ENCODE measurements at regions of chr15 and their contacts with region 1.

Region 1: GRCh38 chr15:101088788-101089583 is 162.9 kb downstream of the CHSY1 start:
- DNase-seq: peak; percentile 66 to 82
- ATAC-seq: peak; percentile 86 to 96
- H3K4me3 ChIP-seq: peak overlapping the region; percentile 41
- H3K27ac ChIP-seq: peak overlapping the region; percentile 60 to 82; a peak in 5 of 6 replicates
- H3K4me1 ChIP-seq: no peaks in the 10 kb centered on the region
- CTCF ChIP-seq: peak; percentile 98
- EP300 ChIP-seq: no peak
- POLR2A ChIP-seq: no peak
- RAD21 ChIP-seq: peak; percentile 85 to 95

Region 2: GRCh38 chr15:100879464-100880138 is 209.4 kb before region 1 on chr15 and contains the start of gene ALDH1A3:
- CTCF ChIA-PET with region 1: no interaction called
- POLR2A ChIA-PET with region 1: no interaction called
- DNase-seq: peak; percentile 65 to 89
- ATAC-seq: peak; percentile 81 to 91
- H3K4me3 ChIP-seq: peak within 1 kb of the TSS; percentile 75
- H3K27ac ChIP-seq: peak within 1 kb of the TSS; percentile 84 to 91
- H3K4me1 ChIP-seq: peaks cover 5% of the 10 kb centered on the region
- CTCF ChIP-seq: no peak
- EP300 ChIP-seq: no peak
- POLR2A ChIP-seq: peak; percentile 84
- RAD21 ChIP-seq: no peak; a peak in 1 of 5 replicates
- polyA plus RNA-seq, gene ALDH1A3: 9.3 and 11.9 TPM in 2 replicates

Region 3: DNA sequence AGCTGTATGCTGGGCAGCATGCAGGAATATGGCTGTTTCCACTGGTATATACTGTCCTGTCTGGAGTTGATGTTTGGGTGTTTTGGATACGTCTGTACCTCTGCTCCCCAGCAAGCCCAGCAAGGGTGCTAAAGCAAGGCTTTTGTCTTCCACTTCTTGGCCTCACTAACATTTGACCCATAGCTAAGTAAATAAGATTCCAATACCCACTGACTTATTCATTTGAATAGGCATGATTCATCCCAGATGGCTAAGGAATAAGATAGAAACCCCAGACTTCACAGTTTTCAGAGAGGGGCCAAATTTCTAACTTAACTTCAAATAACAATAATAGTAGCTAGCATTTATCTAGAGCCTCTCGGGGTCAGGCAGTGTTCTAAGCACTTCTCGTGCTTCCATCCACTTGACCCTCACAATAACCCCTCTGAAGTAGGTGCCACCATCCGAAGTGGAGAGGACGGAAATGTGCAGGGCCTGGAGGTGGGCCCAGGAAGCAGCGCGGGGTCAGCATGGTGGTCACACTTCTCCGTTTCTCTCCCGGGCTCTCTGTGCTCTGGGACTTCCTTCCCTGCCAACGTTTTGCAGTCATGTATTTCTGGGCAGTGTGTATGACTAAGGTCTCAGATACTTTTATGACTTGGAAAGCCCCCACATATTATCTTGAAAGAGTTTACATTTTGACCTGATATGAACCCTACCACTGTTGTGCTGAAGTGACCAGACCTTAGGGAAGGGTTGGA is 130.5 kb before region 1 on chr15:
- CTCF ChIA-PET with region 1: no interaction called
- POLR2A ChIA-PET with region 1: no interaction called
- DNase-seq: peak; percentile 77 to 90
- ATAC-seq: peak; percentile 84 to 90
- H3K4me3 ChIP-seq: peak overlapping the region; percentile 30
- H3K27ac ChIP-seq: peak overlapping the region; percentile 81 to 93
- H3K4me1 ChIP-seq: peaks cover 42% of the 10 kb centered on the region
- CTCF ChIP-seq: no peak
- EP300 ChIP-seq: peak; percentile 27 to 59; a peak in 2 of 5 replicates
- POLR2A ChIP-seq: peak; percentile 32
- RAD21 ChIP-seq: peak; percentile 14 to 20; a peak in 2 of 5 replicates

Region 4: GRCh38 chr15:101014921-101015841 is 73.8 kb before region 1 on chr15:
- CTCF ChIA-PET with region 1: interaction called, 11 read pairs
- POLR2A ChIA-PET with region 1: no interaction called
- DNase-seq: peak; percentile 68 to 92
- ATAC-seq: peak; percentile 74 to 84
- H3K4me3 ChIP-seq: no peak overlapping the region
- H3K27ac ChIP-seq: no peak overlapping the region
- H3K4me1 ChIP-seq: no peaks in the 10 kb centered on the region
- CTCF ChIP-seq: peak; percentile 93
- EP300 ChIP-seq: no peak
- POLR2A ChIP-seq: no peak
- RAD21 ChIP-seq: peak; percentile 85 to 88

Region 5: GRCh38 chr15:101062471-101063171 is 26.4 kb before region 1 on chr15:
- CTCF ChIA-PET with region 1: interaction called, 10 read pairs
- POLR2A ChIA-PET with region 1: no interaction called
- DNase-seq: no peak
- ATAC-seq: no peak
- H3K4me3 ChIP-seq: no peak overlapping the region
- H3K27ac ChIP-seq: no peak overlapping the region
- H3K4me1 ChIP-seq: no peaks in the 10 kb centered on the region
- CTCF ChIP-seq: no peak
- EP300 ChIP-seq: no peak
- POLR2A ChIP-seq: no peak
- RAD21 ChIP-seq: no peak

Region 6: DNA sequence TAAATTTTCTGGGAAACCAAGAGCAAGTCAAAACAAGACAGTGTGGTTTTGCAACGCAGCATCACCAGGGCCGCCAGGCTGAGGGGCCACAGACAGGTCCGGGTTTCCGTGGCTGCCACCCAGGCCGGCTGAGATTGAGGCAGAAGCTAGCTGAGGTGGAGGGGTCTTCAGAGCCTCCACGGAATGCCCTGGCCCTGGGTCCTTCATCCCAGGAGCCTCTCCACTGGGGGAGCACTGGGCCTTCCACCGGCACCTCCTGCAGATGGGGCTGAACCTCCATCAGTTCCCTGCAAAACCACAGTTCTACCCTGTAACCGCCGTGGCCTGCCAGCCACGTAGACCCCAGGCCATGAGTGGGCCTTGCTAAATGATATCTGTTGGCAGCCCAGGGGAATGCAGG is 10.2 kb after region 1 on chr15:
- CTCF ChIA-PET with region 1: interaction called, 38 read pairs
- POLR2A ChIA-PET with region 1: no interaction called
- DNase-seq: no peak
- ATAC-seq: no peak
- H3K4me3 ChIP-seq: no peak overlapping the region
- H3K27ac ChIP-seq: no peak overlapping the region
- H3K4me1 ChIP-seq: no peaks in the 10 kb centered on the region
- CTCF ChIP-seq: no peak
- EP300 ChIP-seq: no peak
- POLR2A ChIP-seq: no peak
- RAD21 ChIP-seq: no peak

Region 7: DNA sequence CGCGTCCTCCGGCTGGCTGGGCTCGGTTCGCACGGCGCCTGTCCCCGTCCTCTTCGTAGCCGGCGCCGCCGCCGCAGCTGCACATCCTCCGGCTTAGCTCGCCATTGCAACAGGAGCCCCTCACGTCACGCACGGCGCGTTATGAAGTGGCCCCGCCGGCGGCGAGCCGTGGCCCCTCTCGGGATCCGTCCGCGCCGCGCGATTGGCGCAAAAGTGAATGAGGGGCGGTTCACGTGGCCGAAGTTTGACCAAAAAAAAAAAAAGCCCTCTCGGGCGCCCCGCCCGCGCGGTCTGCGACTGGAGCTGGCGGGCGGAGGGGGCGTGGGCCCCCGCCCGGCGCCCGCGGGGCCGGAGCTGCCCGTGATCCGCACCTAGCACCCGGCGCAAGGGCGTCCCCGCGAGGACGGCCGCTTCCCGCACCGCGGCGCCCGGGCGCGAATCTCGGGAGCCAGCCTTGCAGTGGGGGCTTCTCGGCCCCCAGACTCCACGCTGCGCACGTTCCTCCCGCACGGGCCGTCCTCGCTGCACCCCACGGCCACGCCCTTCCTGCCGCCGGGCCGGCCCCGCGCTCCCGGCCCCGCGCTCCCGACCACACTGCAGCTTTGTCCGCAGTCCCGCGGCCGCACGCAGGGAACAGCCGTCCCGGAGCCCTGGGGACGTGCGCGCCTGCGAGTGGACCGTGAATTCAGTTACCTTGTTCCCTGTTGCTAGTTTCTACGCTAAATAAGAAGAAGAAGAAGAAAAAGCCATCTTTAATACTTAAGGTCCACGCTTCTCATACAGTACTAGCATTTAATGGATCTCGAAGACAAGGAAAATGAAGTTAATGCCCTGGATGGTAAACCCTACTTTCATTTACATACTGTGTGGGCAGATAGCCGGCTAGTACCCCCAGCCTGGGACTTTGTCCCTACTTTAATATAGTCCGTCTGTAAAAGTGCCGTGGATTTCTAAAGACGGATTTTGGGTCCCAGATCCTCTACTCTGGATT is 163.1 kb after region 1 on chr15 and contains the start of gene CHSY1:
- CTCF ChIA-PET with region 1: interaction called, 275 read pairs
- POLR2A ChIA-PET with region 1: interaction called, 5 read pairs
- DNase-seq: peak; percentile 85 to 92
- ATAC-seq: peak; percentile 74 to 85
- H3K4me3 ChIP-seq: peak within 1 kb of the TSS; percentile 82
- H3K27ac ChIP-seq: peak within 1 kb of the TSS; percentile 85 to 92
- H3K4me1 ChIP-seq: peaks cover 17% of the 10 kb centered on the region
- CTCF ChIP-seq: peak; percentile 44
- EP300 ChIP-seq: no peak
- POLR2A ChIP-seq: peak; percentile 93
- RAD21 ChIP-seq: peak in 1 of 2 experiments; percentile 56; a peak in 3 of 5 replicates
- polyA plus RNA-seq, gene CHSY1: 27.9 and 28.1 TPM in 2 replicates

Region 8: DNA sequence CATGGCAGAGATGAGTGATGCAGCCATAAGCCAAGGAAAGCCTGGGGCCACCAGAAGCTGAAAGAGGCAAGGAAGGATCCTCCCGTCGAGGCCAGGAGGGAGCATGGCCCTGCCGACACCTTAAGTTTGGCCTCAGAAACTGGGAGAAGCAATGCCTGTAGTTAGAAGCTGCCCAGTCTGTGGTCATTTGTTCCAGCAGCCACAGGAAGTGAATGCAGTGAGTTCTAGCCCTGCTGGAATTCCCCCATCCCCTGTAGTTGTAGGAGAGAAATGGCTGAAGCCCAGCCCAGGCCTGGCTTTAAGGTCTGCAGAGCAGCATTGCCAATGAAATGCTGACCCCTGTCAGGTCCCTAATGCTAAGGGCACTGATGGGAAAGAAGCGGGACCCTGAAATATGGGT is 175.0 kb after region 1 on chr15:
- CTCF ChIA-PET with region 1: interaction called, 275 read pairs
- POLR2A ChIA-PET with region 1: no interaction called
- DNase-seq: no peak
- ATAC-seq: no peak
- H3K4me3 ChIP-seq: no peak overlapping the region
- H3K27ac ChIP-seq: no peak overlapping the region
- H3K4me1 ChIP-seq: no peaks in the 10 kb centered on the region
- CTCF ChIP-seq: no peak
- EP300 ChIP-seq: no peak
- POLR2A ChIP-seq: no peak
- RAD21 ChIP-seq: no peak